GM12878 (cell line): ENCODE measurements at regions of chr4 and their contacts with region 1.

Region 1: GRCh38 chr4:104860238-104861123 is 286.2 kb upstream of the TET2 start:
- DNase-seq: peak; percentile 72
- ATAC-seq: peak; percentile 94
- H3K4me3 ChIP-seq: no peak overlapping the region
- H3K27ac ChIP-seq: no peak overlapping the region
- H3K4me1 ChIP-seq: no peaks in the 10 kb centered on the region
- H3K27me3 ChIP-seq: no peaks in the 10 kb centered on the region
- CTCF ChIP-seq: peak; percentile 74 to 96 (median 90); a peak in 5 of 6 replicates
- EP300 ChIP-seq: no peak
- POLR2A ChIP-seq: no peak
- RAD21 ChIP-seq: peak; percentile 100

Region 2: DNA sequence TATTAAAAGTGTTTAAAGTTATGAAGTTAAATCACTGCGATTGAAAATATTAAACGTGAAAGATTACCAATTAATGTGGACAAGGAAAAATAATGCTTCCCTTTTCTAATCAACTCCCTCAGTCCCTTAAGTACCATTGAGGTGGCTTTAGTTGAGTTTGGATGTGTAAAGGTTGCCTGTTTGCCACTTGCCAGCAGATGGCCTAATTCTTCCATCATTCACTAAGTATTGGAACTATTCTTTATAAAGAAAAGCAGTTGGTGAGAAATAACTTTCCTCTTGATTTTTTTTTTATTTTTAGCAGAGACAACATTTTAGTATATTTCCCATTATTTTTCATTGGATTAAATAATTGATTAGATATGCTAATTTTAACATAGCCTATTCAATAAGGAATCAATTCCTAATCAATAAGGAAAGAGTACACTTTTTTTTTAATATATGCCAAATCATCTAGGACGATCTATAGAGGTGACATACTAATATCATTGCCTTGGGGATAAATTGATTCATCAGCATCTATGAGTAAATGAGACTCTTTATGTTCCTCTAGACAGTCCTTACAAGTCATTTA is 844.7 kb before region 1 on chr4:
- CTCF ChIA-PET with region 1: no interaction called
- POLR2A ChIA-PET with region 1: no interaction called
- RAD21 ChIA-PET with region 1: no interaction called
- SMC1A ChIA-PET with region 1: no interaction called
- in situ Hi-C with region 1: no loop called
- intact Hi-C with region 1: loop called (anchors 1 kb)
- DNase-seq: no peak
- ATAC-seq: peak; percentile 78
- H3K4me3 ChIP-seq: no peak overlapping the region
- H3K27ac ChIP-seq: no peak overlapping the region
- H3K4me1 ChIP-seq: no peaks in the 10 kb centered on the region
- H3K27me3 ChIP-seq: no peaks in the 10 kb centered on the region
- CTCF ChIP-seq: peak; percentile 32 to 51 (median 45); a peak in 5 of 6 replicates
- EP300 ChIP-seq: no peak
- POLR2A ChIP-seq: no peak
- RAD21 ChIP-seq: peak; percentile 70

Region 3: DNA sequence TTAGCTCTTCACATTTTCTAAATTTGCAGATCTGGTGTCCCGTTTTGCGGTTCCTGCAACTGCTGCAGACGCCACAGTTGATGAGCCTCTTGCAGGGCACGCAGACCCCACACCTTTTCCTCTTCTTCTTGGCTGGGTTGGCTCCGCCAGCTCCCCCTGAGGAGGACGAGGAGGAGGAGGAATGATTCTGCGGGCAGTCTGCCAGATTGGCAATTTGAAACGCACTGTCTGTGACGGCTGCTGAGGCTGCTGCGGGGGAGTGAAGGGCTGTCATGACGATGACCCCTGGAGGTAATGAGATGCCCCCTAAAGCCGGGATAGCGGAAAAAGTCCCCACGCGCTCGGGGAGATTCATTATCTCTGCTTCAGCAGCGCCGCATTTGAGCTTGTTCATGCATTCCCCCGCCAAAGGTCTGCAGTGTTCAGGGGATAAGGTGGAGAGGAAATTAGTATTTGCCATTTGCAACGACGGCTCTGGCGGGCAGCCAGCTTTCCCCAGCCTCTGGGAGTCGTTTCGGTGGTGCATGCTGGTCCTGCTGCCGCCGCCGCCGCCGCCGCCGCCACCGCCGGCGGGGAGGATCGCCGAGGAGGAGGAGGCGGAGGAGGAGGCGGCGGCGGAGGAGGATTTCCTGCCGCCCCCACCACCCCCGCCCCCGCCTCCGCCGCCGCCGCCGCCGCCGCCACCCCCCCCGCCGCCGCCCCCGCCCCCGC is 369.6 kb before region 1 on chr4:
- CTCF ChIA-PET with region 1: interaction called, 9 read pairs
- POLR2A ChIA-PET with region 1: interaction called, 3 read pairs
- RAD21 ChIA-PET with region 1: interaction called, 3 read pairs
- SMC1A ChIA-PET with region 1: interaction called, 5 read pairs
- in situ Hi-C with region 1: loop called (anchors 10 kb)
- intact Hi-C with region 1: loop called (anchors 1 kb)
- DNase-seq: no peak
- ATAC-seq: peak; percentile 7
- H3K4me3 ChIP-seq: peak overlapping the region; percentile 78
- H3K27ac ChIP-seq: peak overlapping the region; percentile 97
- H3K4me1 ChIP-seq: peaks cover 16% of the 10 kb centered on the region
- H3K27me3 ChIP-seq: no peaks in the 10 kb centered on the region
- CTCF ChIP-seq: no peak
- EP300 ChIP-seq: no peak
- POLR2A ChIP-seq: peak; percentile 63
- RAD21 ChIP-seq: no peak

Region 4: GRCh38 chr4:104593019-104593418 is 267.5 kb before region 1 on chr4:
- CTCF ChIA-PET with region 1: interaction called, 10 read pairs
- POLR2A ChIA-PET with region 1: no interaction called
- RAD21 ChIA-PET with region 1: no interaction called
- SMC1A ChIA-PET with region 1: interaction called, 3 read pairs
- in situ Hi-C with region 1: no loop called
- intact Hi-C with region 1: no loop called
- DNase-seq: no peak
- ATAC-seq: no peak
- H3K4me3 ChIP-seq: no peak overlapping the region
- H3K27ac ChIP-seq: no peak overlapping the region
- H3K4me1 ChIP-seq: no peaks in the 10 kb centered on the region
- H3K27me3 ChIP-seq: no peaks in the 10 kb centered on the region
- CTCF ChIP-seq: no peak
- EP300 ChIP-seq: no peak
- POLR2A ChIP-seq: no peak
- RAD21 ChIP-seq: no peak

Region 5: DNA sequence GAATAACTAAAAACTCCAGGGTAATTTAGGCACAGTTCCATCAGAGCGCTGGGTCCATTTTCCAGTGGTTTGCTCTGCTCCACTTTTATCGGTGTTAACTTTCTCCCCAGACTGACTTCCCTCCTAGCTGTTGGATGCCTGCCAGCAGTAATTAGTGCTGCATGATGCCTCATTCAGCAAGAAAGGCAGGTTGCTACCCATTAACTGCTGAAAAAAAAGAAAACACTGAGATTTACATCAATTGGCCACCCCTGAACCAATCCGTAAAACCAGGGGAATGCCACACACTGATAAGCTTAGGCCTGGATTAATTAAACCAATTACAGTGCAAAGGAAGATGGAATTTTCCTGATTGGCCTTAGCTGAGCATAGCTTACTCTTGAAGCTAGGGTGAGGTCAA is 183.4 kb before region 1 on chr4:
- CTCF ChIA-PET with region 1: interaction called, 7 read pairs
- POLR2A ChIA-PET with region 1: no interaction called
- RAD21 ChIA-PET with region 1: interaction called, 5 read pairs
- SMC1A ChIA-PET with region 1: interaction called, 3 read pairs
- in situ Hi-C with region 1: no loop called
- intact Hi-C with region 1: loop called (anchors 5 kb)
- DNase-seq: no peak
- ATAC-seq: no peak
- H3K4me3 ChIP-seq: no peak overlapping the region
- H3K27ac ChIP-seq: no peak overlapping the region
- H3K4me1 ChIP-seq: no peaks in the 10 kb centered on the region
- H3K27me3 ChIP-seq: no peaks in the 10 kb centered on the region
- CTCF ChIP-seq: no peak
- EP300 ChIP-seq: no peak
- POLR2A ChIP-seq: no peak
- RAD21 ChIP-seq: no peak

Region 6: DNA sequence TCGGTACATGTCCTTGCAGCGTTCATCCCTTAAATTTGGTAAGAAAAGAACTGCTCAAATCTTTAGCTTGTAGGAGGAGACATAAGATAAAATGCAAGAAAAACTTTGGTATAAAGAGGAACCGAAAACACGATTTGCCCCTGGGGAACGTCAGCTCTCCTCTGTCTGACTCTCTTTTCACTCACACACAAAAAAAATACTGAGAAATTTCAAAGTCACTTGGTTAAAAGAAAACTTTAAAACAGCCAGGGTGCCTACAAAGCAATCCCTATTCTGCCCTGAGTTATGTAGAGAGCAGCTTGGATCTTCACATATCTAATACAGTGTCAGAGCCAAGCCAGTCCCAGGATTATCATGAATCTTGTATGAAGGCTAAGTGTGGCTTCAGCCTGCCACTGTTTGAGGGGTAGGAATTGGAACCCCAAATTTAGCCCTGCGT is 117.2 kb before region 1 on chr4:
- CTCF ChIA-PET with region 1: interaction called, 20 read pairs
- POLR2A ChIA-PET with region 1: no interaction called
- RAD21 ChIA-PET with region 1: interaction called, 19 read pairs
- SMC1A ChIA-PET with region 1: interaction called, 26 read pairs
- in situ Hi-C with region 1: no loop called
- intact Hi-C with region 1: no loop called
- DNase-seq: peak; percentile 89
- ATAC-seq: peak; percentile 94
- H3K4me3 ChIP-seq: peak overlapping the region; percentile 30; the same call in 1 of the 2 replicates
- H3K27ac ChIP-seq: peak overlapping the region; percentile 95
- H3K4me1 ChIP-seq: peaks cover 12% of the 10 kb centered on the region
- H3K27me3 ChIP-seq: no peaks in the 10 kb centered on the region
- CTCF ChIP-seq: no peak
- EP300 ChIP-seq: peak; percentile 46 to 93; a peak in 3 of 4 replicates
- POLR2A ChIP-seq: no peak
- RAD21 ChIP-seq: no peak

Region 7: GRCh38 chr4:105369988-105370387 is 509.5 kb after region 1 on chr4:
- CTCF ChIA-PET with region 1: no interaction called
- POLR2A ChIA-PET with region 1: no interaction called
- RAD21 ChIA-PET with region 1: no interaction called
- SMC1A ChIA-PET with region 1: no interaction called
- in situ Hi-C with region 1: no loop called
- intact Hi-C with region 1: no loop called
- DNase-seq: no peak
- ATAC-seq: no peak
- H3K4me3 ChIP-seq: no peak overlapping the region
- H3K27ac ChIP-seq: no peak overlapping the region
- H3K4me1 ChIP-seq: no peaks in the 10 kb centered on the region
- H3K27me3 ChIP-seq: no peaks in the 10 kb centered on the region
- CTCF ChIP-seq: no peak
- EP300 ChIP-seq: no peak
- POLR2A ChIP-seq: no peak
- RAD21 ChIP-seq: no peak